ENCODE measurements at regions of chr3 and their contacts with region 1.

Region 1: GRCh38 chr3:4712143-4712542 is 219.0 kb downstream of the ITPR1 start:
- DNase-seq: peak in 1 of 9 experiments; percentile 16
- ATAC-seq: no peak
- H3K4me3 ChIP-seq: no peak overlapping the region
- H3K4me3 Mint-ChIP-seq: no peak overlapping the region
- H3K27ac ChIP-seq: no peak overlapping the region
- H3K27ac Mint-ChIP-seq: no peak overlapping the region
- H3K4me1 ChIP-seq: no peaks in the 10 kb centered on the region
- H3K4me1 Mint-ChIP-seq: no peaks in the 10 kb centered on the region
- H3K27me3 ChIP-seq: no peaks in the 10 kb centered on the region
- H3K27me3 Mint-ChIP-seq: no peaks in the 10 kb centered on the region
- CTCF ChIP-seq: no peak

Region 2: GRCh38 chr3:3951071-3951470 is 761.1 kb before region 1 on chr3:
- CTCF ChIA-PET with region 1: no interaction called
- POLR2A ChIA-PET with region 1: no interaction called
- intact Hi-C with region 1: no loop called
- DNase-seq: no peak
- ATAC-seq: no peak
- H3K4me3 ChIP-seq: no peak overlapping the region
- H3K4me3 Mint-ChIP-seq: no peak overlapping the region
- H3K27ac ChIP-seq: no peak overlapping the region
- H3K27ac Mint-ChIP-seq: no peak overlapping the region
- H3K4me1 ChIP-seq: no peaks in the 10 kb centered on the region
- H3K4me1 Mint-ChIP-seq: no peaks in the 10 kb centered on the region
- H3K27me3 ChIP-seq: no peaks in the 10 kb centered on the region
- H3K27me3 Mint-ChIP-seq: no peaks in the 10 kb centered on the region
- CTCF ChIP-seq: no peak

Region 3: DNA sequence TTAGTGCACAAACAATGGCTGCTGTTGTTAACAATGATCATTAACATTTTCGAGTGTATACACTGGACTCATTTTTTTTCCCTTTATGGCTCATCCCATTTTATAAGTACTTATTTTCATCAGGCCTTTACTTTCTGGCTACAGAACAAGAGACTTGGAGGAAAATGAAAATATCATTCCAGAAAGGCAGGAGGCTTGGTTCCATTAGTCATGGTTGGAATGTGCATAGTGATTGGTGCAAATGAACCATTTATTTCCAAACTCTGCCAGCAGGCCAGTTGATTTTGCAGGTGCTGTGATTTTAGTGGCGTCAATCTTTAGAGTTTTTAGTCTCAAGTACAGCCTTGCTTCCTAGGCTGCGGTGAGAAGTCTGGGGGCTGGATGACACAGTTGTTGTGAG is 67.2 kb before region 1 on chr3:
- CTCF ChIA-PET with region 1: no interaction called
- POLR2A ChIA-PET with region 1: no interaction called
- intact Hi-C with region 1: no loop called
- DNase-seq: no peak
- ATAC-seq: no peak
- H3K4me3 ChIP-seq: no peak overlapping the region
- H3K4me3 Mint-ChIP-seq: no peak overlapping the region
- H3K27ac ChIP-seq: no peak overlapping the region
- H3K27ac Mint-ChIP-seq: no peak overlapping the region
- H3K4me1 ChIP-seq: no peaks in the 10 kb centered on the region
- H3K4me1 Mint-ChIP-seq: peaks cover 10% of the 10 kb centered on the region
- H3K27me3 ChIP-seq: no peaks in the 10 kb centered on the region
- H3K27me3 Mint-ChIP-seq: no peaks in the 10 kb centered on the region
- CTCF ChIP-seq: no peak

Region 4: DNA sequence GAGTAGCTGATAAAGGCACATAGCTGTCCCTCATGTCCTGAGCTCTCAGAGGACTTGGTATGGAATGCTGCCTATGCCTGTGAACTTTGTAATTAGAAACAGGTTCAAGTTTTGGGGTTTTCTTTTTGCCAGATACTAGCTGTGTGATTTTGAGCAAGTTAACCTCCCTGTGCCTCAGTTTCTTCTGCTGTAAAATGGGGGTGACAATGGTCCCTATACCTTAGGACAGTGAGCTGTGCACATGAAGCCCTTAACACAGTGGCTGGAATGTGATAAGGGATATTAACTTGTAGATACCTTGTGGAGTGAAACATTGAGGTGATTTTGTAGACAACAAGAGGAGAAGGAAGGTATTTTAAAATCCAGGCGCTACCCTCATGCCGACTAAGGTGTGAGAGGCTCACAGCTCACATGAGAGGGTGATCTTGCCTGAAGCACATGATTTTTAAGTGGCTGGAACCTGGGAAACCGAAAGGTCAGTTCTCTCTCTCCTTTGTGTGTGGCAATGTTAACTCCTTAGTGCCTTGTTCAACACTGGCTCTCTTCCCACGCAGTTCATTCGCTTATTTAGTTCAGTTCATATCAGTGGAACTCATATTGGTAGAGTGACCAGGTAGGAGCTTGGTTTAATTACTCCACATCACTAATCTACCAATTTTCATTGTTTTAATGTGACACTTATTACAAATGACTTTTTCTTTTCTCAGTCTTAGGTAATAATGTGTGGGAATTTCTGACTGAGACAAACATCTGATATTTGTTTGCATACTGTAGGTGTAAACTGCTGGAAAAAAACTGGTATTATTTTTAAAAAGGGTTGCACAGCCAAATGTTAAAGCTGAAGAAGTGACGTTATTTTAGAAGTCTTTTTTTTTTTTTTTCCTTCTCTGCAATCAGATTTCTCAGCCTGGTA is 17.2 kb after region 1 on chr3:
- CTCF ChIA-PET with region 1: interaction called, 29 read pairs
- POLR2A ChIA-PET with region 1: no interaction called
- intact Hi-C with region 1: no loop called
- DNase-seq: no peak
- ATAC-seq: no peak
- H3K4me3 ChIP-seq: no peak overlapping the region
- H3K4me3 Mint-ChIP-seq: no peak overlapping the region
- H3K27ac ChIP-seq: no peak overlapping the region
- H3K27ac Mint-ChIP-seq: peak overlapping the region; percentile 14
- H3K4me1 ChIP-seq: peaks cover 9% of the 10 kb centered on the region
- H3K4me1 Mint-ChIP-seq: peaks cover 9% of the 10 kb centered on the region
- H3K27me3 ChIP-seq: no peaks in the 10 kb centered on the region
- H3K27me3 Mint-ChIP-seq: no peaks in the 10 kb centered on the region
- CTCF ChIP-seq: no peak

Region 5: GRCh38 chr3:4826237-4827100 is 114.3 kb after region 1 on chr3:
- CTCF ChIA-PET with region 1: interaction called, 8 read pairs
- POLR2A ChIA-PET with region 1: no interaction called
- intact Hi-C with region 1: loop called in 1 of 2 experiments (anchors 1 kb)
- DNase-seq: no peak
- ATAC-seq: no peak
- H3K4me3 ChIP-seq: peak overlapping the region in 1 of 2 experiments; percentile 0
- H3K4me3 Mint-ChIP-seq: peak overlapping the region; percentile 64
- H3K27ac ChIP-seq: no peak overlapping the region
- H3K27ac Mint-ChIP-seq: no peak overlapping the region
- H3K4me1 ChIP-seq: peaks cover 82% of the 10 kb centered on the region
- H3K4me1 Mint-ChIP-seq: peaks cover 94% of the 10 kb centered on the region
- H3K27me3 ChIP-seq: no peaks in the 10 kb centered on the region
- H3K27me3 Mint-ChIP-seq: no peaks in the 10 kb centered on the region
- CTCF ChIP-seq: no peak

Region 6: GRCh38 chr3:4986782-4987537 is 274.8 kb after region 1 on chr3:
- CTCF ChIA-PET with region 1: interaction called, 47 read pairs
- POLR2A ChIA-PET with region 1: no interaction called
- intact Hi-C with region 1: no loop called
- DNase-seq: peak; percentile 56 to 86 (median 70)
- ATAC-seq: peak; percentile 35
- H3K4me3 ChIP-seq: peak overlapping the region; percentile 52 to 59
- H3K4me3 Mint-ChIP-seq: peak overlapping the region; percentile 83
- H3K27ac ChIP-seq: peak overlapping the region; percentile 19 to 74
- H3K27ac Mint-ChIP-seq: peak overlapping the region; percentile 88
- H3K4me1 ChIP-seq: peaks cover 43% of the 10 kb centered on the region
- H3K4me1 Mint-ChIP-seq: peaks cover 39% of the 10 kb centered on the region
- H3K27me3 ChIP-seq: no peaks in the 10 kb centered on the region
- H3K27me3 Mint-ChIP-seq: no peaks in the 10 kb centered on the region
- CTCF ChIP-seq: no peak

Region 7: DNA sequence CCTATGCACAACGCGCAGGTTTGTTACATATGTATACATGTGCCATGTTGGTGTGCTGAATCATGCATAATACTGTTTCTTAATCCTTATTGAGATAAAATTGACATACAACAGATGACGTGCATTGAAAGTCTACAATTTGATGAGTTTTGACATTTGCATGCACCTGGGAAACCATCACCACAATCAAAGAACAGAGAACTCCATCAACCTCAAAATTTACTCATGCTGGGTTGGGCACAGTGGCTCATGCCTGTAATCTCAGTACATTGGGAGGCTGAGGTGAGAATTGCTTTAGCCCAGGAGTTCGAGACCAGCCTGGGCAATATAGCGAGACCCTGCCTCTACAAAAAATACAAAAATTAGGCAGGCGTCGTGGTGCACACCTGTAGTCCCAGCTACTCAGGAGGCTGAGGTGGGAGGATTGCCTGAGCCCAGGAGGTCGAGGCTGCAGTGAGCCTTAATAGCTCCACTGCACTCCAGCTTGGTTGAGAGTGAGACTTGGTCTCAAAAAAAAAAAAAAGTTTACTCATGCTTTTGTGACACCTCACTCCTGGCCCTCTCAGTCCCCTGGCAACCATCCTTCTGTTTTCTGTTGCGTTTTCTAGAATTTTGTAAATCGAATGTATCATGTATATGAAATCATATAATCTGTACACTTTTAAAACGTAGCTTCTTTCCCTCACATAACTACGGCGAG is 323.7 kb after region 1 on chr3:
- CTCF ChIA-PET with region 1: interaction called, 34 read pairs
- POLR2A ChIA-PET with region 1: no interaction called
- intact Hi-C with region 1: no loop called
- DNase-seq: no peak
- ATAC-seq: no peak
- H3K4me3 ChIP-seq: no peak overlapping the region
- H3K4me3 Mint-ChIP-seq: no peak overlapping the region
- H3K27ac ChIP-seq: no peak overlapping the region
- H3K27ac Mint-ChIP-seq: no peak overlapping the region
- H3K4me1 ChIP-seq: no peaks in the 10 kb centered on the region
- H3K4me1 Mint-ChIP-seq: peaks cover 2% of the 10 kb centered on the region
- H3K27me3 ChIP-seq: no peaks in the 10 kb centered on the region
- H3K27me3 Mint-ChIP-seq: peaks cover 3% of the 10 kb centered on the region
- CTCF ChIP-seq: no peak